HepG2 (cell line): ENCODE measurements at regions of chrX and their contacts with region 1.

Region 1: DNA sequence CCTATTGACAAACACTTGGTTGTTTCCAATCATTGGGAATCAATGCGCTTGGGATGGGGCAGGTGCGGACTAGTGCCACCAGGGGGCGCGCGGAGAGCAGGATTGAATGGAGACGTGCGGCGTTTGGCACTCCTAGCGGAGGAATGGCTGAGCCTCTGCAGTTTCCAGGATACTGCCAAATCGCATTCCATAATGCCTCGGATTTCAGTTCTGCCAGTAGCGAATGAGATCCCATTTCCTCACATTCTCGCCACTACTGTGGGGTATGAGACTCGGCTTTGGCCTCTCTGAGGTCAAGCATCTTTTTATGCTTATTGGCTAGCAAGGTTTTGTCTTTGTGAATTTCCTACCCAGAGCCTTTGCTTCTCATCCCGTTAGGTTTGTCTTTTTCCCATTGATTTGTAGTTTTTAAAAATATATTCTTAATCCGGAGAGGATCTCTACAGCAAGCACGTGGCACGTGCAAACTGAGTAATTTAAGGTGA is 28.7 kb downstream of the CLDN34 start:
- DNase-seq: peak; percentile 60
- ATAC-seq: peak; percentile 86
- H3K4me3 ChIP-seq: no peak overlapping the region
- H3K27ac ChIP-seq: no peak overlapping the region
- H3K4me1 ChIP-seq: peaks cover 9% of the 10 kb centered on the region; the same call in 1 of the 2 replicates
- H3K27me3 ChIP-seq: no peaks in the 10 kb centered on the region
- CTCF ChIP-seq: peak; percentile 88
- EP300 ChIP-seq: no peak
- POLR2A ChIP-seq: no peak
- RAD21 ChIP-seq: peak; percentile 95

Region 2: DNA sequence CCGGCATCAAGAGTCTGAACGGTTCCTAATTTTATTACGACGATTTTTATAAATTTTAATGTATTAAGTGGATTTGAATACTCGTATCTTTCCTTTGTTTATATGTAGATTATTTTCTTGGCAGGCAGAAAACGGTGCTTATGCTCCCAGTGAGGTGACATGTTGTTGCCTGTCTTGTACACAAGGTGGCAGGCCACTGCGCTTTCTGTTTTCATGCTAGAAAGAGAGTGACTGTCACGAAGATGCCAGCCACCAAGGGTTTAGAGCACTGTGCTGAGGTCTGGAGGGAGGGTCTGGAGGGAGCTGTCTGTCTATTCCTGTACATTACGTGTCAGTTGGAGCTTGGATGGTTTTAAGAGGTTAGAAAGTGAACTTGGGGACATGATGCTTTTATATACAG is 121.9 kb before region 1 on chrX:
- CTCF ChIA-PET with region 1: interaction called, 12 read pairs
- POLR2A ChIA-PET with region 1: no interaction called
- in situ Hi-C with region 1: no loop called
- intact Hi-C with region 1: no loop called
- DNase-seq: peak; percentile 24
- ATAC-seq: peak; percentile 75
- H3K4me3 ChIP-seq: no peak overlapping the region
- H3K27ac ChIP-seq: no peak overlapping the region
- H3K4me1 ChIP-seq: no peaks in the 10 kb centered on the region
- H3K27me3 ChIP-seq: no peaks in the 10 kb centered on the region
- CTCF ChIP-seq: peak; percentile 63
- EP300 ChIP-seq: no peak
- POLR2A ChIP-seq: no peak
- RAD21 ChIP-seq: no peak

Region 3: GRCh38 chrX:9885150-9885549 is 110.7 kb before region 1 on chrX:
- CTCF ChIA-PET with region 1: interaction called, 4 read pairs
- POLR2A ChIA-PET with region 1: no interaction called
- in situ Hi-C with region 1: loop called (anchors 10 kb)
- intact Hi-C with region 1: loop called (anchors 1 kb)
- DNase-seq: peak; percentile 30
- ATAC-seq: peak; percentile 93
- H3K4me3 ChIP-seq: no peak overlapping the region
- H3K27ac ChIP-seq: no peak overlapping the region
- H3K4me1 ChIP-seq: 0 out of 2 replicates have a peak, but pooled peaks cover 21% of the 10 kb centered on the region
- H3K27me3 ChIP-seq: no peaks in the 10 kb centered on the region
- CTCF ChIP-seq: peak; percentile 78
- EP300 ChIP-seq: no peak
- POLR2A ChIP-seq: no peak
- RAD21 ChIP-seq: peak; percentile 36; the same call in 1 of the 2 replicates

Region 4: GRCh38 chrX:10103023-10103422 is 107.1 kb after region 1 on chrX:
- CTCF ChIA-PET with region 1: interaction called, 6 read pairs
- POLR2A ChIA-PET with region 1: no interaction called
- in situ Hi-C with region 1: no loop called
- intact Hi-C with region 1: loop called (anchors 5 kb)
- DNase-seq: no peak
- ATAC-seq: no peak
- H3K4me3 ChIP-seq: no peak overlapping the region
- H3K27ac ChIP-seq: no peak overlapping the region
- H3K4me1 ChIP-seq: peaks cover 24% of the 10 kb centered on the region
- H3K27me3 ChIP-seq: no peaks in the 10 kb centered on the region
- CTCF ChIP-seq: no peak
- EP300 ChIP-seq: no peak
- POLR2A ChIP-seq: no peak
- RAD21 ChIP-seq: no peak

Region 5: GRCh38 chrX:10111364-10112148 is 115.7 kb after region 1 on chrX:
- CTCF ChIA-PET with region 1: interaction called, 696 read pairs
- POLR2A ChIA-PET with region 1: no interaction called
- in situ Hi-C with region 1: loop called (anchors 5 kb)
- intact Hi-C with region 1: no loop called
- DNase-seq: peak; percentile 32
- ATAC-seq: peak; percentile 60
- H3K4me3 ChIP-seq: no peak overlapping the region
- H3K27ac ChIP-seq: no peak overlapping the region
- H3K4me1 ChIP-seq: 0 out of 2 replicates have a peak, but pooled peaks cover 14% of the 10 kb centered on the region
- H3K27me3 ChIP-seq: no peaks in the 10 kb centered on the region
- CTCF ChIP-seq: no peak
- EP300 ChIP-seq: no peak
- POLR2A ChIP-seq: no peak
- RAD21 ChIP-seq: no peak

Region 6: DNA sequence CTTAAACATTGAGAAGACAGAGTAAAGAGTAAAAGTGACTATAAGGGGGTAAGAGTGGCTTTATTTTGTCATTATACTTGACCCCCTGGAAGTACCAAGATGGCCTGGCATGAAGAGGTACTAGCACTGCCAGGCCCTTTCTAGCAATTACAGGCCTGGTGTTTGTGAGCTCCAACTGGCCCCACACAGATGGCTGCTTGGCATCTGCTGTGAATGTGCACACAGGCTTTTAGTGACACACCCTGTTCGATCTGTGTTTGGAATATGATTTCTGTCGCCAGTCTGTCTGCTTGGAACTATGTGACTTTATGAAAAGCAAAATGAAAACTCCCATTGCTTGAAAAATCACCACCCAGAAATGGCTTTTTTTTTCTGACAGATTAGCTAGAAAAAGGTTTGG is 284.2 kb after region 1 on chrX:
- CTCF ChIA-PET with region 1: no interaction called
- POLR2A ChIA-PET with region 1: no interaction called
- in situ Hi-C with region 1: no loop called
- intact Hi-C with region 1: no loop called
- DNase-seq: no peak
- ATAC-seq: no peak
- H3K4me3 ChIP-seq: no peak overlapping the region
- H3K27ac ChIP-seq: no peak overlapping the region
- H3K4me1 ChIP-seq: no peaks in the 10 kb centered on the region
- H3K27me3 ChIP-seq: no peaks in the 10 kb centered on the region
- CTCF ChIP-seq: no peak
- EP300 ChIP-seq: no peak
- POLR2A ChIP-seq: no peak
- RAD21 ChIP-seq: no peak